ENCODE measurements at regions of chr4 and their contacts with region 1.

Region 1: DNA sequence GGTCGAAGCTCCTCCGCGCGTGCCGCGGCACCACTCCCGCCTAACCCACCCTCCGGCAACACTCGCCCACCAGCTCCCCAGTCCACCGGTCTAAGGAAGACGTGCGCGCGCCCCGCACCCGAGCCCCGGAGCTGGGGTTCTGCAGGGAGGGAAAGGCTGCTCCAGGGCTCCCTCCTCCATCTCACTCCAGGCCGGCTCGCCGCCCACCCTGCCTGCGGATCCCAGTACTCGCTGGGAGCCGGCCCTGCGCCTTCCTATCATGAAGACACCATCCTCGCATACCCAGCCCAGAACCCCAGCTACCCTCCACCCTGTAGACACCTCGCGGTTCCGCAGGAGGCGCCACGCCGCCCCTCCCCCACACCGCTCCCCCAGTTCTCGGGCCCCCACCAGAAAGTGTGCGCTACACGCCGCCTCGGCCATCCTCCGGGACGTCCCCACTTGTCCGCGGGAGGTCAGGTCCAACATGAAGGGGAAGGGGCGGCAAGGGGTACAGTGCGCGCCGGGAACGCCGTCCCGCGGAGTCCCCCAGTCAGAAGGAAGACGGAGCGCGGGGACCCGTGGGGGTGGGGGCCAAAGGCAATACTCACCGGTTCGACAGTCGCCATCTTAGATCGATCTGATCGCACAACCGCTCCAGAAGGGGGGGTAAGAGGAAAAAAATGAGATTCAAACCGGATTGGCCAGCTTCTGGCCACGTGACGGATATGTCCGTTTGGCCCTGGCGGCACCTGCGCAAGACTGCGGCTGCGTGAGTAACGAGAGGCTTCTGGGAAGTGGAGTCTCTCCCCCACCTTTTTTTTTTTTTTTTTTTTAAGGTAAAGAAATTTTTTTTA is at the start of gene EIF4E:
- DNase-seq: peak; percentile 96
- H3K4me3 Mint-ChIP-seq: peak within 1 kb of the TSS; percentile 98
- H3K27ac Mint-ChIP-seq: peak within 1 kb of the TSS; percentile 100
- H3K4me1 Mint-ChIP-seq: peaks cover 46% of the 10 kb centered on the region
- H3K27me3 Mint-ChIP-seq: no peaks in the 10 kb centered on the region
- total RNA-seq, gene EIF4E: 137 and 147 TPM in 2 replicates

Region 2: DNA sequence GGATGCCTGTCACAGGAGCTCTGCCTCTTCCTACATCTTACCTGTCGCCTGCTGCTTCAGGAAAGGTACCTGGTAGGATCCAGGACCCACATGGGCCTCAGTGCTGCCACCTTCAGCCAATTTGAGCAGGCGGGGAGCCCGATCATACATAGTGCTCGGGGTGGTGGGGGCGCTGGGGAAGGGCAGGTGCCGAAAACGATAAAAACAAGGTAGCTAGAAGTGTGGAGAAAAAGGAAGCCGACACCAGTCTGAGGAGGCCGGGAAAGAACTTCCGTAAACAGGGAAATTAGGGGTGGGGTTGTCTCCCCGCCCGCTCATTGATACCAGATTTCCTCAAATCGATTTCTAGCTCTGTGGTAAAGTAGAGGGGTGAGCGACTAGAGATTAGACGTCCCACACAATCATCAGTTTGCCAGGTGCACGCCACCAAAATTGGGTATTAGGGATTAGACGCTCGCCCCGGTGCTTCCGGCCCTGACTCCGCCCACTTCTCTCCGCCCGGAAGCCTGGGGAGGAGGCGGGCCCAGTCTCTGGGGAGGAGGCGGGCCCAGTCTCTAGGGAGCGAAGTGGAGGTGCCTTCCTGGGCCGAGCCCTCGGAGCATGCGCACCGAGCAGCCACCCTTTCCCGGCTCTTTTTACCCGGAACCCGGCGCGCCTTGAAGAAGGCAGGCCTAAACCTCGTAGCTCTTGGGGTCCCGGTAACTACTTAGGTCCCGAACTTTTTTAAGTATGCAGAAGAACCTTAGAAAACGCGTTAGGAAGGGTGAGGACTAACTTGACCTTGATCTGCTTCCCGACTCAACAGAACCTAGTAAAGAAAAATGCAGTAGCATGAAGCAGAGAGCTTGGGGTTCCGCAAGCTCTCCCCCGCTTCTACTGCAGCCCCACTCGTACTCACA is 785.5 kb before region 1 on chr4 and contains the start of gene STPG2:
- intact Hi-C with region 1: loop called (anchors 1 kb)
- DNase-seq: peak; percentile 91
- H3K4me3 Mint-ChIP-seq: peak within 1 kb of the TSS; percentile 88
- H3K27ac Mint-ChIP-seq: peak within 1 kb of the TSS; percentile 93
- H3K4me1 Mint-ChIP-seq: peaks cover 18% of the 10 kb centered on the region
- H3K27me3 Mint-ChIP-seq: peaks cover 7% of the 10 kb centered on the region
- total RNA-seq, gene STPG2: not detected in 2 replicates

Region 3: GRCh38 chr4:98467627-98468072 is 461.1 kb before region 1 on chr4:
- intact Hi-C with region 1: loop called (anchors 5 kb)
- DNase-seq: peak; percentile 63
- H3K4me3 Mint-ChIP-seq: peak overlapping the region; percentile 69
- H3K27ac Mint-ChIP-seq: peak overlapping the region; percentile 29
- H3K4me1 Mint-ChIP-seq: peaks cover 54% of the 10 kb centered on the region
- H3K27me3 Mint-ChIP-seq: no peaks in the 10 kb centered on the region

Region 4: GRCh38 chr4:99054428-99054994 is 125.8 kb after region 1 on chr4:
- intact Hi-C with region 1: loop called (anchors 1 kb)
- DNase-seq: no peak
- H3K4me3 Mint-ChIP-seq: no peak overlapping the region
- H3K27ac Mint-ChIP-seq: peak overlapping the region; percentile 7
- H3K4me1 Mint-ChIP-seq: peaks cover 49% of the 10 kb centered on the region
- H3K27me3 Mint-ChIP-seq: no peaks in the 10 kb centered on the region

Region 5: GRCh38 chr4:99457270-99457669 is 528.5 kb after region 1 on chr4:
- intact Hi-C with region 1: no loop called
- DNase-seq: no peak
- H3K4me3 Mint-ChIP-seq: no peak overlapping the region
- H3K27ac Mint-ChIP-seq: no peak overlapping the region
- H3K4me1 Mint-ChIP-seq: no peaks in the 10 kb centered on the region
- H3K27me3 Mint-ChIP-seq: peaks cover 2% of the 10 kb centered on the region

Region 6: DNA sequence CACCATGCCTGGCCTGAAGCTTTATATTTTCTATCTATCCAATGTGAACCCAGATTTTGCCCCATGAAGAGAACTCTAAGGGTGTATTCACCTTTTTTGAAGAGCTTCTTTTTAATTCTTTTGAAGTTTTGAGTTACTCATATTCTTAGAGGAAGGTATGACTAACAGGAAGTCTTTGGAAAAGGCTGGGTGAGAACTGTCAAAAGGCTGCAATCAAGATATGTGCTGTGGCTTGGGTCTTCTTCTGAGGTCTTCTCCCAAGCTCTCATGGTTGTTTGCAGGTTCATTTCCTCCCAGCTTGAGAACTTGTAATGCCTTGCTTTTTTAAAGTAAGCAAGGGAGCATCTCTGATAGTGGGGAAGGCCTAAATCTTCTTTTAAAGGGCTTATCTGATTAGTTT is 579.0 kb after region 1 on chr4:
- intact Hi-C with region 1: loop called (anchors 2 kb)
- DNase-seq: peak; percentile 50
- H3K4me3 Mint-ChIP-seq: peak overlapping the region; percentile 12
- H3K27ac Mint-ChIP-seq: peak overlapping the region; percentile 87
- H3K4me1 Mint-ChIP-seq: peaks cover 36% of the 10 kb centered on the region
- H3K27me3 Mint-ChIP-seq: peaks cover 2% of the 10 kb centered on the region

Region 7: DNA sequence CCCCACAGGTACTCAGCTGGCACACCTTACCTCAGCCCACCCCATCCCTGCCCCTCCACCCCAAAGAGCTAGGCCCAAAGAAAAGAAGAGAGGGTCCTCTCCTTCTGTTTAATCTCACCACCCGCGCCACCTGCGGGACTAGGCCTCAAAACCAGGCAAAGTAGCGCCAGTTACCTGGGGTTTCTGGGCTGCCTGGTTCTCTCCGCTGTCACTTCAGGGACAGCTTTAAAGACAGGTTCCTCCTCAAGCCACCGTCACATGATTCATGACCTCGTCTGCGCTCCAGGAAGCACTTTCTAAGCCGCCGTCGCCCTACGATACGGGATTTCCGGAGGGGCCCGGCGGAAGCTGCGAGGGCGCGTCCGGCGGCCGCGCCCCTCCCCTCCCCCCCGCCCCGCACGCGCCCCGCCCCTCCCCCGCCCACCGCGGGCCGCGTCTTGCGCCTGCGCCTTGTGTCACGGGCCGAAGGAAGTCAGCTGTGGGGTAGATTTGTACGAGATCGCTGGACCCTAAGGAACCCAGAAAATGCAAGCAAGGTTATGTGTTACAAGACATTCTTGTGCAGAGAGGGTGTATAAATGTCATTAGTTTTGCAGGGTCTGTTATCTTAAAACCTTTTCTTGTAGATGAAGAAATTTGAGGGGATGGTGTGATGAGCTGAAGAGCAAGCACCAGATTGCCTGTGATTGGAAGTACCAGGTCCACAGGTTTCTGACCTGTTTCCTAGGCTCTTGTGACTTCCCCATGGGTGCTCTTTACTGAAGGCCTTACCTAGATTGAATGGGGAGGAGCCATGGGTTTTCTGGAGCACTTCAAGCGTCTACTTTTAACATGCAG is 965.7 kb after region 1 on chr4 and contains the start of gene LAMTOR3:
- intact Hi-C with region 1: loop called (anchors 1 kb)
- DNase-seq: peak; percentile 87
- H3K4me3 Mint-ChIP-seq: peak within 1 kb of the TSS; percentile 97
- H3K27ac Mint-ChIP-seq: peak within 1 kb of the TSS; percentile 95
- H3K4me1 Mint-ChIP-seq: peaks cover 42% of the 10 kb centered on the region
- H3K27me3 Mint-ChIP-seq: no peaks in the 10 kb centered on the region
- total RNA-seq, gene LAMTOR3: 28.6 and 29.7 TPM in 2 replicates